CD8-positive, alpha-beta T cell (primary cell): ENCODE measurements at regions of chr11 and their contacts with region 1.

Region 1: DNA sequence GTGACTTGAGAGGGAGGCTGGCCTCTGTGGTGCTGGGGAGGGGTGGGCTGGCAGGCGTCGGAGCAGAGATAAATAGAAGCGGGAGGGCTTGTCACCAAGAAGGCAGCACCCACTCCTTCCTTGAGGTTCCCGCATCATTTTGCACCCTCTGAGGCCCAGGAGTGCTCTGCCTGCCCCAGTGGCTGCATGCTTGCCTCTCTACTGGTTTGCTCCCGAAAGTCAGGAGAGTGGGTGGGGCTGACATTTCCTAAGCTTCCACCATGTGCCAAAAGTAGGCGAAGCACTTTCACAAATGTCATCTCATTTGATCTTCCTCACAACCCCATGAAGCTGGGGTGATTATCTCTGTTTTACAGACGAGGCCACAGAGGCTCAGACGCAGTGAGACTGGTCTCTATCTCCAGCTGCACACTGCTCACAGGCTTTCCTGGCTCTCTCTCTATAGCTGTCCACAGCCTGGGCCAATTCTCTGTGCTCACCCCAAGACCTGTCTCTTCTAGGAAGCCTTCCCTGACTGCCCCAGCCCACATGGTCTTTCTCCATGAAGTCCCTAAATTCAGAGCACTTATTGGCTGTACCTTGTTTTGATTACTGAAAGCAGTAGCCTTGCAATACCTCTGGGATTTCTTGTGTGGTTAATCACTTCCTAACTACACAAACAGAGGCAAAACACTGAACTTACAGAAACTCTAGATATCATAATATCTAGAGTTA is 2.6 kb upstream of the UCP3 start:
- DNase-seq: peak in 3 of 9 experiments; percentile 27 to 74 (median 34)
- ATAC-seq: peak; percentile 55
- H3K4me3 ChIP-seq: no peak overlapping the region
- H3K4me3 Mint-ChIP-seq: peak overlapping the region; percentile 63
- H3K27ac ChIP-seq: peak overlapping the region; percentile 32 to 52
- H3K27ac Mint-ChIP-seq: peak overlapping the region; percentile 94
- H3K4me1 ChIP-seq: peaks cover 93% of the 10 kb centered on the region
- H3K4me1 Mint-ChIP-seq: peaks cover 88% of the 10 kb centered on the region
- H3K27me3 ChIP-seq: no peaks in the 10 kb centered on the region
- H3K27me3 Mint-ChIP-seq: no peaks in the 10 kb centered on the region
- CTCF ChIP-seq: no peak

Region 2: GRCh38 chr11:73671701-73672100 is 339.8 kb before region 1 on chr11:
- CTCF ChIA-PET with region 1: no interaction called
- POLR2A ChIA-PET with region 1: no interaction called
- intact Hi-C with region 1: no loop called
- DNase-seq: peak in 1 of 9 experiments; percentile 37
- ATAC-seq: no peak
- H3K4me3 ChIP-seq: no peak overlapping the region
- H3K4me3 Mint-ChIP-seq: no peak overlapping the region
- H3K27ac ChIP-seq: no peak overlapping the region
- H3K27ac Mint-ChIP-seq: no peak overlapping the region
- H3K4me1 ChIP-seq: no peaks in the 10 kb centered on the region
- H3K4me1 Mint-ChIP-seq: no peaks in the 10 kb centered on the region
- H3K27me3 ChIP-seq: no peaks in the 10 kb centered on the region
- H3K27me3 Mint-ChIP-seq: no peaks in the 10 kb centered on the region
- CTCF ChIP-seq: no peak

Region 3: GRCh38 chr11:73889019-73889418 is 122.5 kb before region 1 on chr11:
- CTCF ChIA-PET with region 1: no interaction called
- POLR2A ChIA-PET with region 1: no interaction called
- intact Hi-C with region 1: no loop called
- DNase-seq: no peak
- ATAC-seq: no peak
- H3K4me3 ChIP-seq: no peak overlapping the region
- H3K4me3 Mint-ChIP-seq: no peak overlapping the region
- H3K27ac ChIP-seq: no peak overlapping the region
- H3K27ac Mint-ChIP-seq: no peak overlapping the region
- H3K4me1 ChIP-seq: no peaks in the 10 kb centered on the region
- H3K4me1 Mint-ChIP-seq: peaks cover 9% of the 10 kb centered on the region
- H3K27me3 ChIP-seq: no peaks in the 10 kb centered on the region
- H3K27me3 Mint-ChIP-seq: no peaks in the 10 kb centered on the region
- CTCF ChIP-seq: no peak

Region 4: GRCh38 chr11:73995247-73995646 is 16.3 kb before region 1 on chr11:
- CTCF ChIA-PET with region 1: interaction called, 3 read pairs
- POLR2A ChIA-PET with region 1: interaction called, 38 read pairs
- intact Hi-C with region 1: loop called in 1 of 2 experiments (anchors 2 kb)
- DNase-seq: peak in 2 of 9 experiments; percentile 81 to 92
- ATAC-seq: peak; percentile 75
- H3K4me3 ChIP-seq: peak overlapping the region; percentile 1 to 28
- H3K4me3 Mint-ChIP-seq: peak overlapping the region; percentile 74
- H3K27ac ChIP-seq: peak overlapping the region; percentile 87 to 98
- H3K27ac Mint-ChIP-seq: peak overlapping the region; percentile 94
- H3K4me1 ChIP-seq: peaks cover 72% of the 10 kb centered on the region
- H3K4me1 Mint-ChIP-seq: peaks cover 73% of the 10 kb centered on the region
- H3K27me3 ChIP-seq: no peaks in the 10 kb centered on the region
- H3K27me3 Mint-ChIP-seq: no peaks in the 10 kb centered on the region
- CTCF ChIP-seq: no peak

Region 5: GRCh38 chr11:74024261-74025029 is 12.9 kb after region 1 on chr11:
- CTCF ChIA-PET with region 1: interaction called, 6 read pairs
- POLR2A ChIA-PET with region 1: no interaction called
- intact Hi-C with region 1: loop called in 1 of 2 experiments (anchors 1 kb)
- DNase-seq: peak in 1 of 9 experiments; percentile 27
- ATAC-seq: no peak
- H3K4me3 ChIP-seq: no peak overlapping the region
- H3K4me3 Mint-ChIP-seq: no peak overlapping the region
- H3K27ac ChIP-seq: no peak overlapping the region
- H3K27ac Mint-ChIP-seq: no peak overlapping the region
- H3K4me1 ChIP-seq: peaks cover 16% of the 10 kb centered on the region
- H3K4me1 Mint-ChIP-seq: peaks cover 6% of the 10 kb centered on the region
- H3K27me3 ChIP-seq: no peaks in the 10 kb centered on the region
- H3K27me3 Mint-ChIP-seq: no peaks in the 10 kb centered on the region
- CTCF ChIP-seq: no peak